ENCODE measurements at regions of chr11 and their contacts with region 1.

Region 1: GRCh38 chr11:111777094-111778046 is 11.2 kb upstream of the PPP2R1B start:
- DNase-seq: no peak
- H3K4me3 ChIP-seq: no peak overlapping the region
- H3K27ac ChIP-seq: peak overlapping the region; percentile 36
- H3K4me1 ChIP-seq: peaks cover 14% of the 10 kb centered on the region
- H3K27me3 ChIP-seq: no peaks in the 10 kb centered on the region
- CTCF ChIP-seq: peak; percentile 86

Region 2: DNA sequence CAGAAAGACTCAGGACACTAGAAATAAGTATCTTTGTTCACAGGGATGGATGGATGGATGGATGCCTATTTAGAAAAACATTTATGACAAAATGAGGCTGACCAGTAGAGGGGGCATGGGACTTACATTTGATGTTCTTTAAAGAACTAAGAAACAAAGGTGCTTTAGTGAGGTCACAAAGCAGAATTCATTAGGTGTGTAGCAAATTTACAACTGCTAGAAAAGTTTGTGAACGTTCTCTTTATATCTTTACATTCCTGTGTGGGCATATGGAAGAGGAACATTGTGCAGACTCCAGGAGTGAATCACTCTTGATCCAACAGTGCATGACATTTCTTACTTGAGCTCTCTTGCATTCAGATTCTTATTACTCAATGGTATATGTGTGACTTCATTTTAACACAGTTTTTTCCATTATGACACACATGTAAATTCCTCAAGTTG is 191.0 kb before region 1 on chr11:
- intact Hi-C with region 1: loop called (anchors 5 kb)
- DNase-seq: no peak
- H3K4me3 ChIP-seq: no peak overlapping the region
- H3K27ac ChIP-seq: no peak overlapping the region
- H3K4me1 ChIP-seq: peaks cover 3% of the 10 kb centered on the region
- H3K27me3 ChIP-seq: no peaks in the 10 kb centered on the region
- CTCF ChIP-seq: peak; percentile 66

Region 3: GRCh38 chr11:111601979-111602864 is 175.1 kb before region 1 on chr11 and contains the start of gene SIK2:
- intact Hi-C with region 1: loop called (anchors 5 kb)
- DNase-seq: peak; percentile 93
- H3K4me3 ChIP-seq: peak within 1 kb of the TSS; percentile 84
- H3K27ac ChIP-seq: peak within 1 kb of the TSS; percentile 95
- H3K4me1 ChIP-seq: peaks cover 65% of the 10 kb centered on the region
- H3K27me3 ChIP-seq: no peaks in the 10 kb centered on the region
- CTCF ChIP-seq: peak; percentile 94
- total RNA-seq, gene SIK2: 16.3 TPM

Region 4: DNA sequence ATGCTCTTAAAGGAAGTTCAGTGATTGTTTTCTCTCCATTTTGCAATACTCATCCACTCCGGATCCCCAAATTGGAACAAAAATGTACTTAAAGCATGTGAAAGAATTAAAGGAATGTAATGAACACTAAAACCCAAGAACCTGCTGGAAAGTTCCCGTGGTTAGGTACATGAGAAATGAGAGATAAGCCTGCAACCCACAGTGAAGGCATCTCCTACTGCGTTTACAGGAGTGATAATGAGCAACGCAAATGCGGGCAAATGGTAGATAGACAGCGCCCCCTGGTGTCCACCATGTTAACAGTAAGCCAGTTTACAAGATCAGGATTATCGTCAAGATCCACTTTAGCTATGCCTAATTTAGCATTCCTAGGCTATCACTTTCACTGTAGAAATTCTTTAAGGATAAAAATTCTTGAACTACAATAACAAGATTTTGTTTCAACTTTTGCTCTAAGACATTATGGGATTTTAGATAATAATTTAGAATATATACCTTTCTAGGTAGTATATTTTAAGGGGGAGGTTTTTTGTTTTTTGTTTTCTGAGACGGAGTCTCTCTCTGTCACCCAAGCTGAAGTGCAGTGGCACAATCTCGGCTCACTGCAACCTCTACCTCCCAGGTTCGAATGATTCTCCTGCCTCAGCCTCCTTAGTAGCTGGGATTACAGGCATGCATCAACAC is 64.1 kb after region 1 on chr11:
- intact Hi-C with region 1: loop called (anchors 10 kb)
- DNase-seq: peak; percentile 86
- H3K4me3 ChIP-seq: no peak overlapping the region
- H3K27ac ChIP-seq: no peak overlapping the region
- H3K4me1 ChIP-seq: peaks cover 12% of the 10 kb centered on the region
- H3K27me3 ChIP-seq: no peaks in the 10 kb centered on the region
- CTCF ChIP-seq: peak; percentile 93

Measured in left ventricle myocardium inferior (tissue), 1 donor.